ENCODE measurements at regions of chr1 and their contacts with region 1.

Region 1: DNA sequence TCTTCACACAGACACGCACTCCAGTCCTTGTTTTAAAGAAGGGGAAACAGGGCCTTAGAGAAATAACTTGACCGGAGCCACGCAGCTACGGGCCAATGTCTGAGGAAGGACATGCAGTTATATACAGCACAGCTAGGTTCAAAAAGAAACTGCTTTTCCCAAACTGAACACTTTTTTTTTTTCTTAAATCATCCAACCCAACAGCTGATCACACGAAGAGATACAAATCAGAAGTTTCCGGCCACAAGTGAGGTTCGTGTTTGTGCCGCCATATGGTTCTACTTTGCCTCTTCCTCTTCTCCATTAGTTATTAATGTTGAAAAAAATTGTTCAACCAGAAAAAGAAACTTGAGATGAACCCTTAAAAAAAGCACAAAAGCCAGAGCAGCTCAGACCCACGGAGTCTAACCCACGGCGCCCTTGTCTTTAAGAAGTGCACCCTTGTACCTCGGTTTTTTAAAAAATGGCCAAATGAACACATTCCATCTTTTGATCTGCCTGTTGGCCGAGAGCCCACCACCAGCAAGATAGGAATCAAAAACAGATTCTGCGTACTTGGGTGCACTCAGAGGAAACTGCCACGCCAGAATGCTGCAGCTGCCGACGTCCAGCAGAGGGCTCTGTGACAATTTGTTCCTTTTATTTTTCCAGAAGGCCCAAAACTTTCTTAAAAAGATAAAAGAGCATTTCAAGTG is 78.9 kb downstream of the SLC66A1 start:
- DNase-seq: peak in 1 of 2 experiments; percentile 35
- H3K4me3 ChIP-seq: no peak overlapping the region
- H3K4me3 Mint-ChIP-seq: no peak overlapping the region
- H3K27ac Mint-ChIP-seq: peak overlapping the region; percentile 20
- H3K4me1 ChIP-seq: peaks cover 25% of the 10 kb centered on the region
- H3K4me1 Mint-ChIP-seq: peaks cover 9% of the 10 kb centered on the region
- H3K27me3 ChIP-seq: no peaks in the 10 kb centered on the region
- H3K27me3 Mint-ChIP-seq: no peaks in the 10 kb centered on the region
- CTCF ChIP-seq: peak; percentile 59 to 76

Region 2: GRCh38 chr1:18828224-18828623 is 562.8 kb before region 1 on chr1:
- CTCF ChIA-PET with region 1: no interaction called
- POLR2A ChIA-PET with region 1: no interaction called
- intact Hi-C with region 1: no loop called
- DNase-seq: no peak
- H3K4me3 ChIP-seq: no peak overlapping the region
- H3K4me3 Mint-ChIP-seq: no peak overlapping the region
- H3K27ac Mint-ChIP-seq: no peak overlapping the region
- H3K4me1 ChIP-seq: no peaks in the 10 kb centered on the region
- H3K4me1 Mint-ChIP-seq: no peaks in the 10 kb centered on the region
- H3K27me3 ChIP-seq: no peaks in the 10 kb centered on the region; the same call in 1 of the 2 replicates
- H3K27me3 Mint-ChIP-seq: peaks cover 8% of the 10 kb centered on the region
- CTCF ChIP-seq: no peak

Region 3: GRCh38 chr1:19341201-19342072 is 49.6 kb before region 1 on chr1:
- CTCF ChIA-PET with region 1: interaction called, 4 read pairs
- POLR2A ChIA-PET with region 1: no interaction called
- intact Hi-C with region 1: loop called (anchors 1 kb)
- DNase-seq: peak; percentile 62 to 75
- H3K4me3 ChIP-seq: no peak overlapping the region
- H3K4me3 Mint-ChIP-seq: no peak overlapping the region
- H3K27ac Mint-ChIP-seq: no peak overlapping the region
- H3K4me1 ChIP-seq: peaks cover 3% of the 10 kb centered on the region; the same call in 1 of the 2 replicates
- H3K4me1 Mint-ChIP-seq: peaks cover 6% of the 10 kb centered on the region
- H3K27me3 ChIP-seq: no peaks in the 10 kb centered on the region
- H3K27me3 Mint-ChIP-seq: no peaks in the 10 kb centered on the region
- CTCF ChIP-seq: peak; percentile 63 to 71

Region 4: DNA sequence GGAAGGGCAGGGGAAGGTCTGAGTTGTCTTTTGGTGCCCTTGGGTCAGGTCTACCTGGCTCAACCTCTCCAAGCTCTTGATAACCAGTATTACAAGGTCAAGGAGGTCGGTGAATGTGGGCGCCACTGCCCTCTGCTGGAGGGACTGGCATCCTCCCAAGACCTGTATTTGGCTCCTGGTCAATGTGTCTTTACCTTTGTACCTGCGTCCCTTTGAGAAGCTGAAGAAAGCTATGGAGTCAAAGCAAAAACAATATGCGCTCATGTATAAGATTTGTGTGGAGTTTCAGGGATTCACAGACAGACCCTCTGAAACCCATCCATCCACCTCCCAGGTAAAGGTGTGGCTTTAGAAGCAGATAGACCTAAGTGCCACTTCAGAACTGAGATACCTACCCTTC is 191.3 kb after region 1 on chr1:
- CTCF ChIA-PET with region 1: interaction called, 5 read pairs
- POLR2A ChIA-PET with region 1: no interaction called
- intact Hi-C with region 1: loop called (anchors 5 kb)
- DNase-seq: peak; percentile 62 to 72
- H3K4me3 ChIP-seq: no peak overlapping the region
- H3K4me3 Mint-ChIP-seq: no peak overlapping the region
- H3K27ac Mint-ChIP-seq: no peak overlapping the region
- H3K4me1 ChIP-seq: no peaks in the 10 kb centered on the region
- H3K4me1 Mint-ChIP-seq: peaks cover 7% of the 10 kb centered on the region
- H3K27me3 ChIP-seq: no peaks in the 10 kb centered on the region
- H3K27me3 Mint-ChIP-seq: no peaks in the 10 kb centered on the region
- CTCF ChIP-seq: peak; percentile 59 to 63

Measured in Caco-2 (cell line).